ENCODE measurements at regions of chr20 and their contacts with region 1.

Region 1: GRCh38 chr20:8756410-8756809 is 312.5 kb upstream of the PLCB4 start:
- DNase-seq: peak; percentile 96
- ATAC-seq: peak; percentile 82
- H3K4me3 ChIP-seq: no peak overlapping the region
- H3K27ac ChIP-seq: no peak overlapping the region
- H3K4me1 ChIP-seq: peaks cover 11% of the 10 kb centered on the region
- H3K27me3 ChIP-seq: no peaks in the 10 kb centered on the region
- CTCF ChIP-seq: no peak
- POLR2A ChIP-seq: no peak
- RAD21 ChIP-seq: no peak

Region 2: DNA sequence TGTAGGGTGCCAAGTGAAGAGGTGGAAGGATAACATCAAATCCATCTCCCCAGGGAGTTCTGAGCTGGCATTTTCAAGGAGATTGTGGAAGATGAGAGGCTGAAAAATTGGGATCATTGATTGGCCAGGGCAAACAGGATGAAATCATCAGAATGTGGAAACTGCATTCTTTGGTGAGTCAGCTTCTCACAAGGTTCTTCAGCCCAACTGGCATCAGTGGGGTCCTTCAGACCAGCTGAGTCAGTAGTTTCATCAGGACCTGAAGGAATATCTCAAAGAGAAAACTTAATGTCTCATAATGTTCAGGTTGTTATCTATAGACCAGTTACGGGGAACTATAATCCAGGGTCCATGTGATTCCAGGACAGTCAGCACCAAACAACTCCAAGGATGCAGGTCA is 1012.0 kb before region 1 on chr20:
- CTCF ChIA-PET with region 1: interaction called, 10 read pairs
- POLR2A ChIA-PET with region 1: no interaction called
- dilution Hi-C with region 1: no loop called
- in situ Hi-C with region 1: no loop called
- intact Hi-C with region 1: no loop called
- DNase-seq: peak; percentile 62
- ATAC-seq: peak; percentile 63
- H3K4me3 ChIP-seq: no peak overlapping the region
- H3K27ac ChIP-seq: no peak overlapping the region
- H3K4me1 ChIP-seq: peaks cover 3% of the 10 kb centered on the region; the same call in 1 of the 2 replicates
- H3K27me3 ChIP-seq: no peaks in the 10 kb centered on the region
- CTCF ChIP-seq: no peak
- POLR2A ChIP-seq: no peak
- RAD21 ChIP-seq: no peak

Region 3: GRCh38 chr20:8860011-8860495 is 103.6 kb after region 1 on chr20:
- CTCF ChIA-PET with region 1: no interaction called
- POLR2A ChIA-PET with region 1: no interaction called
- dilution Hi-C with region 1: no loop called
- in situ Hi-C with region 1: no loop called
- intact Hi-C with region 1: no loop called
- DNase-seq: peak; percentile 98
- ATAC-seq: peak; percentile 91
- H3K4me3 ChIP-seq: no peak overlapping the region
- H3K27ac ChIP-seq: no peak overlapping the region
- H3K4me1 ChIP-seq: peaks cover 7% of the 10 kb centered on the region
- H3K27me3 ChIP-seq: no peaks in the 10 kb centered on the region
- CTCF ChIP-seq: no peak
- POLR2A ChIP-seq: no peak
- RAD21 ChIP-seq: no peak

Region 4: GRCh38 chr20:9400171-9401025 is 644.0 kb after region 1 on chr20:
- CTCF ChIA-PET with region 1: no interaction called
- POLR2A ChIA-PET with region 1: no interaction called
- dilution Hi-C with region 1: no loop called
- in situ Hi-C with region 1: no loop called
- intact Hi-C with region 1: no loop called
- DNase-seq: peak; percentile 20
- ATAC-seq: peak; percentile 77
- H3K4me3 ChIP-seq: no peak overlapping the region
- H3K27ac ChIP-seq: no peak overlapping the region
- H3K4me1 ChIP-seq: peaks cover 6% of the 10 kb centered on the region
- H3K27me3 ChIP-seq: no peaks in the 10 kb centered on the region
- CTCF ChIP-seq: no peak
- POLR2A ChIP-seq: no peak
- RAD21 ChIP-seq: no peak